ENCODE measurements at regions of chr19 and their contacts with region 1.

Region 1: GRCh38 chr19:38115271-38115802 is 108.7 kb downstream of the DPF1 start:
- DNase-seq: no peak
- H3K4me3 ChIP-seq: no peak overlapping the region
- CTCF ChIP-seq: no peak

Region 2: GRCh38 chr19:38134540-38135149 is 19.3 kb after region 1 on chr19:
- CTCF ChIA-PET with region 1: interaction called, 18 read pairs
- POLR2A ChIA-PET with region 1: no interaction called
- DNase-seq: no peak
- H3K4me3 ChIP-seq: no peak overlapping the region
- CTCF ChIP-seq: peak; percentile 52

Measured in AG04449 (cell line).